Dorsolateral prefrontal cortex (tissue), 120 donors: ENCODE measurements at regions of chr6 and their contacts with region 1.

Region 1: DNA sequence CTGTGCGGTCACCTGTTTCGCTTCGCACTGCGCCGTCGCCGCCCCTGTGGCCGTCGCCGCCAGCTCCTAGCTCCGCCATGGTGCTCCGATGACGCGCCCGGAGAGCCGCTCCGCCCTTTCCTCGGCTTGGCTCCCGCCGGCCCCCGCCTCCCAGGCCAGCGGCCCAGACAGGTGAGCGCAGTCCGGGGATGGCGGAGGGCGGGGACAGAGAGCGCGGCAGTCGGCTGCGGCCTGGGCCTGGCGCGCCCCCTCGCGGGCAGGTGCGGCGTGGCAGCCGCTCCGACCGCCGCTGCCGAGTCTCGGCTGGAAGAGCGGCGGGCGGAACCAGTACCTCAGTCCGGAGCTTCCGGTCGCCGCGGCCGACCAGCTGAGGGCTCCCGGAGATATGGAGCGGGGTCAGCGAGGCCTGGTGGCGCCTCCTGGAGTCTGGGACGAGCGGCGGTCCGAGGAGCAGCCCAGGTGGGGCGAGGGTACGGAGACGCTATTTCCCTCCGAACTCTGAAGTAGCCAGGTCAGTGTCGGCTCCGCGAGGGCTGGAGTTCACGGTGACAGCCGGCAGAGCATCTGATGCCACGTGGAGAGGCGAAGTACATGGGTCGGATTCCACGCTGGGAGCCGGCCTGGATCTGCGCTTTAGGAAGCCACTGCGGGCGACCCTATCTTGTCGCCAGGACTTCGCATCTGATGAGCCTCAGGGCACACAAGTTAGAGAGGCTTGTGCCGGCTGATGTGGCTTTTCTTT is at the start of gene MAP7:
- DNase-seq: peak in 9 of 10 donors; percentile 29 to 89 (median 57)
- H3K4me3 ChIP-seq: peak within 1 kb of the TSS; percentile 67 to 96 (median 88)
- H3K27ac ChIP-seq: peak within 1 kb of the TSS in 56 of 59 donors; percentile 25 to 93 (median 75)
- H3K27me3 ChIP-seq: no peaks in the 10 kb centered on the region
- CTCF ChIP-seq: peak; percentile 66 to 99 (median 93)
- total RNA-seq, gene MAP7: 56.8 to 230 (median 104) TPM

Region 2: DNA sequence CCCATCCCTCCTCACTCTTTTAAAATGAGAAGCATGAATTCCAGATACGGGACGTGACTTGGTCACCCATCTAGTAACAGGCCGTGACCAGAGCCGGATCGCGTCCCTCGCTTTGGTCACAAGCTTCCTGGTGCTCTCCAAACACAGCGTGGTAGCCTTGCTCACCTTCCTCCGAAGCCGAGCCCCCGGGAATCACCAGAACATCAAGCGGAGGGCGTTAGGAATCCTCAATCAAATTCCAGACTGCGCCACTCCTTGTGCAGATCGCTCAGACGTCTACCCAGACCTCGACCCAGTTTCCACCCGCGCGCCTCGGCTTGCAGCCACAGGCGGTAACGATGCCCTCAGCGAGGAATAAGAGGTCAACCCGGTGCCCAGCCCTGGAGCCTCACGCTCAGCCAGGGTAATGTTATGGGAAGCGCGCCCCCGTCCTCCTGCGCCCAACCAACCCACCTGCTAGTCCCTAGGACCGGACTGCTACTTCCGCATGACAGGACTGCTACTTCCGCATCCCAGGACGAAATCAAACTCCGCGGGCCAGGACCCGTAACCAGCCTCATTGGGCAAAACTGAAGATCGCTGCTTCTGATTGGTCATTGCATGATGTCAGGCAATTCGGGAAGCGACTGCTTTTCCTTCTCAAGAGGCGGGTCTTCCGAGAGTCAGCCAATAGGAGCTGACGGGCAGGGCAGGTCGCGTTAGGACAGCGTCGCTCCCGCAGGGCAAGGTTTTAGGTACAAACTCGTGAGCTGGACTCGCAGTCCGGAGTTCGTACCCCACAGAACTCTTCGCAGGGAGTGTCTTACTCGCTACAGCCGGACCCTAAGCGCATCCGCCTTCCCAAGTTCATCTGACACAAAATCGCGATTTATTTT is 300.5 kb before region 1 on chr6 and contains the start of gene MTFR2:
- intact Hi-C with region 1: loop called in 1 of 2 experiments (anchors 10 kb)
- DNase-seq: peak; percentile 77 to 96 (median 94)
- H3K4me3 ChIP-seq: peak within 1 kb of the TSS; percentile 44 to 93 (median 75)
- H3K27ac ChIP-seq: peak within 1 kb of the TSS in 6 of 59 donors; percentile 7 to 63 (median 42)
- H3K27me3 ChIP-seq: no peaks in the 10 kb centered on the region
- CTCF ChIP-seq: peak in 21 of 56 donors; percentile 12 to 47 (median 23)
- total RNA-seq, gene MTFR2: 0.28 to 2.8 (median 0.73) TPM in 49 of 120 experiments, not detected in the others

Region 3: GRCh38 chr6:136289579-136290409 is 260.7 kb before region 1 on chr6 and contains the start of gene BCLAF1:
- intact Hi-C with region 1: loop called in 1 of 2 experiments (anchors 5 kb)
- DNase-seq: peak; percentile 100
- H3K4me3 ChIP-seq: peak within 1 kb of the TSS; percentile 60 to 100 (median 95)
- H3K27ac ChIP-seq: peak within 1 kb of the TSS; percentile 95 to 100 (median 100)
- H3K27me3 ChIP-seq: no peaks in the 10 kb centered on the region
- CTCF ChIP-seq: peak in 17 of 56 donors; percentile 3 to 39 (median 15)
- total RNA-seq, gene BCLAF1: 105 to 231 (median 178) TPM

Region 4: DNA sequence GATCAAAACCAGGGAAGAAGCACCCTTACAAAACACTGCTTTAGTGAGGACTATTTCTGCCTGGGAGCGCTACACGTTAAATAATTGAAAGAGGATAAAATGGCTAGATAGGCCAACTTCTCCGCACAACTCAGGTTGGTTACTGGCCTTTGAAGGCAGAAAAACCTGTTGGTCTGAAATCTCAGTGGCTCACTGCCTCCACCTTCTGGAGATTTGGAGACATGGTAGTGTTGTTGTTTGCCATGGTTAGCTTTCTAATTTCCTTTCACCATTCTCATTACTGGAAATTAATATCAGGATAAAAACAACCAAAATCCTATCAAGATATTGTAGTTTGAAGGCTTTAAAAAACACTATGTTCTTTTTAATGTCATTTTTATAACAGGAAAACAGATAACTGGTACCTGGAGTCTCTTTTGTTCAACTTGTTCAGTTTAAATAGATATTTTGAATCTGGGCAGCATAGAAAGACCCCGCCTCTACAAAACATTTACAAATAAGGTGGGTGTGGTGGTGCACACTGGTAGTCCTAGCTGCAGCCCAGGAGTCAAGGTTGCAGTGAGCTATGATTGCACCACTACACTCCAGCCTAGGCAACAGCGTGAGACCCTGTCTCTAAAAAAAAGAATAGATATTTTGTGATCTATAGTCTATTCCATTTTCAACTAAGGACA is 233.3 kb before region 1 on chr6:
- intact Hi-C with region 1: loop called in 1 of 2 experiments (anchors 5 kb)
- DNase-seq: peak in 5 of 10 donors; percentile 42 to 71 (median 54)
- H3K4me3 ChIP-seq: peak overlapping the region in 5 of 59 donors; percentile 11 to 29 (median 21)
- H3K27ac ChIP-seq: peak overlapping the region in 21 of 59 donors; percentile 5 to 60 (median 33)
- H3K27me3 ChIP-seq: no peaks in the 10 kb centered on the region
- CTCF ChIP-seq: peak; percentile 58 to 95 (median 87)

Region 5: GRCh38 chr6:136334853-136335252 is 215.6 kb before region 1 on chr6:
- intact Hi-C with region 1: loop called in 1 of 2 experiments (anchors 5 kb)
- DNase-seq: no peak
- H3K4me3 ChIP-seq: no peak overlapping the region
- H3K27ac ChIP-seq: peak overlapping the region; percentile 8 to 90 (median 76)
- H3K27me3 ChIP-seq: no peaks in the 10 kb centered on the region
- CTCF ChIP-seq: peak in 23 of 56 donors; percentile 8 to 45 (median 19)

Region 6: DNA sequence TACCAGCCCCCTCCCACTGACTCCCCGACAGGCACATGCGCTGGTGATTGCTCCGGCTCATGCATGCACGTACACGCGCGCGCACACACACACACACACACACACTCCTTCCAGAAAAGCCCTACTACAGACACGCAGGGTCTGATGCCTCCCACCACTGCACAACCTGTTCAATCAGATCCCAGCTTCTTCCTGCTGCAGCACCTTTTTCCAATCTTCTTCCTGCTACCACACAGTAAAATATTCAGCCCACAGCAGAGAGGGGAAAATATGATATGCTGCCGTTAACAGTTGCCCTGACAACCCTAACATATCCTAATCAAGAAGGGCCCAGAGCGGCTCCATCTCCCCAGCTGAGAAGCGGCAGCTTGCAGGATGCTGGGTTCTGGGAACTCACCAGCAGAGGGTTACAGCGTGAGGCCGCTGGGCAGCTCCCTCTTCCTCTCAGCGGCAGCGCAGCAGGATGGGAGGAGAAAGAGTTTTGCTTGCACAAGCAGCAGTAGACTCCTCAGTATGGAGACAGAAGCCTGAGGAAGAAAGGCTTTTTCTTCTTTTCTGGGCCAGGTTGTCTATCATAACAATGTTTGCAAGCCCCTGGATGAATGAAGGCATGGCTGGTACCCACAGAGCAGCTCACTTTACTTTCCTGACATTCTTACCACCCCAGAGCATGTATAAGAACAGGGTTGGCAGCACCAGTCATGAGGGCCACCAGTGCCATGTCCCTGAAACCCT is 24.1 kb before region 1 on chr6:
- intact Hi-C with region 1: loop called in 1 of 2 experiments (anchors 2 kb)
- DNase-seq: peak; percentile 62 to 91 (median 87)
- H3K4me3 ChIP-seq: peak overlapping the region; percentile 35 to 81 (median 66)
- H3K27ac ChIP-seq: peak overlapping the region; percentile 66 to 99 (median 96)
- H3K27me3 ChIP-seq: no peaks in the 10 kb centered on the region
- CTCF ChIP-seq: peak in 48 of 56 donors; percentile 4 to 64 (median 46)

Region 7: GRCh38 chr6:136607932-136608772 is 57.7 kb after region 1 on chr6:
- intact Hi-C with region 1: no loop called
- DNase-seq: peak in 9 of 10 donors; percentile 46 to 78 (median 67)
- H3K4me3 ChIP-seq: no peak overlapping the region
- H3K27ac ChIP-seq: no peak overlapping the region
- H3K27me3 ChIP-seq: no peaks in the 10 kb centered on the region
- CTCF ChIP-seq: peak; percentile 33 to 78 (median 68)

Region 8: GRCh38 chr6:136945711-136946121 is 395.2 kb after region 1 on chr6:
- intact Hi-C with region 1: no loop called
- DNase-seq: no peak
- H3K4me3 ChIP-seq: no peak overlapping the region
- H3K27ac ChIP-seq: no peak overlapping the region
- H3K27me3 ChIP-seq: peaks cover 0 to 12% (median 0%) of the 10 kb centered on the region in 45 donors
- CTCF ChIP-seq: no peak